Left colon (tissue), 2 donors: ENCODE measurements at regions of chr12 and their contacts with region 1.

Region 1: DNA sequence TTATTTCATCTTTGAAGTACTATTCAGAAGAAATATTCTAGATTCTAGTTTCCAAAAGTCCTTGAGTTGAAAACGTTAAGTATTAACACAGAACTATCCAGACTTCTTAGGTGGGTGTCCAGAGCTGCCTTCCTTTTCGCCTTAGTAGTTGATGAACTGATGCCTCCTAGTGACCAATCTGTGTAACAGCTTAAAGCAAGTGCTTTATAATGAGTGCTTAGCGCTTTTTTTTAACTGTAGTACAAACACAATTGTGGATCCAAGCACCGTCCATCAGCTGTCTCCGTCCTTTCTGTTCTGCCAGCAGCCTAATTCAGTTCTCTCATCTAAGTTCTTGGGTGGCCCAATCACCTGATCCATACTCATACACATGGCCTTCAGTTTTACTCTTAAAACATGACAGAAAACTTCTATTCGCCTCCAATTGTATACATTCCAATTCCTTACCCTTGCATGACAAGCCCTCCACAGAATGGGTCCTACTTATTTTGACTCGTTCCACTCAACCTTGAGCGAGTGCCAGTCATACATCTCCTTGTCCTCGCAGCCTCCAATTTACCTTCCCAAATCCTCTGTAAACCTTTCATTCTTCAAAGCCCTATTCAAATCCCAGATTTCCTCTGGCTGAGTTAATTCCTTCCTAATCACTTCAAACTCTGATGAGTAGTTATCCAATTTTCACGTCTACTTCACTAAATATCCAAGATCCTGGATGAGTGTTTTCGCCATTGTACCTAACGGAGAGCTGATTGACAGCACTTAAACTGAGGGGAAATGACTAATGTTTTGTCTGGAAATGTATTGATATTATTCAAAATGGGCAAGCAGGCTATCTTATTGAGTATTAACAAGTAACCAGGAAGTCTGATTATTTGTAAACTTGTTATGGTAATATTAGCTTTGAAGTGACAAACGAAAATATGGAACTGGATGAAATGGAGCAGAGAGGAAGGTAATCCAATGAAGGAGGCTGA is 5.8 kb upstream of the PHLDA1 start:
- DNase-seq: no peak
- ATAC-seq: peak; percentile 76

Region 2: GRCh38 chr12:75526655-75527511 is 510.5 kb before region 1 on chr12:
- intact Hi-C with region 1: loop called in 1 of 2 experiments (anchors 2 kb)
- DNase-seq: no peak
- ATAC-seq: peak; percentile 66